Activated T-helper 2 cell treated with anti-CD3 and anti-CD28 coated beads, Interferon-gamma antibody, Interleukin-2, Interleukin-4, amounts not matched to agents 10 μg/mL and 5 μg/mL and 100 μg/mL, durations not matched to agents 14 hours and 24 hours and 36 hours (primary cell): ENCODE measurements at regions of chr11 and their contacts with region 1.

Region 1: DNA sequence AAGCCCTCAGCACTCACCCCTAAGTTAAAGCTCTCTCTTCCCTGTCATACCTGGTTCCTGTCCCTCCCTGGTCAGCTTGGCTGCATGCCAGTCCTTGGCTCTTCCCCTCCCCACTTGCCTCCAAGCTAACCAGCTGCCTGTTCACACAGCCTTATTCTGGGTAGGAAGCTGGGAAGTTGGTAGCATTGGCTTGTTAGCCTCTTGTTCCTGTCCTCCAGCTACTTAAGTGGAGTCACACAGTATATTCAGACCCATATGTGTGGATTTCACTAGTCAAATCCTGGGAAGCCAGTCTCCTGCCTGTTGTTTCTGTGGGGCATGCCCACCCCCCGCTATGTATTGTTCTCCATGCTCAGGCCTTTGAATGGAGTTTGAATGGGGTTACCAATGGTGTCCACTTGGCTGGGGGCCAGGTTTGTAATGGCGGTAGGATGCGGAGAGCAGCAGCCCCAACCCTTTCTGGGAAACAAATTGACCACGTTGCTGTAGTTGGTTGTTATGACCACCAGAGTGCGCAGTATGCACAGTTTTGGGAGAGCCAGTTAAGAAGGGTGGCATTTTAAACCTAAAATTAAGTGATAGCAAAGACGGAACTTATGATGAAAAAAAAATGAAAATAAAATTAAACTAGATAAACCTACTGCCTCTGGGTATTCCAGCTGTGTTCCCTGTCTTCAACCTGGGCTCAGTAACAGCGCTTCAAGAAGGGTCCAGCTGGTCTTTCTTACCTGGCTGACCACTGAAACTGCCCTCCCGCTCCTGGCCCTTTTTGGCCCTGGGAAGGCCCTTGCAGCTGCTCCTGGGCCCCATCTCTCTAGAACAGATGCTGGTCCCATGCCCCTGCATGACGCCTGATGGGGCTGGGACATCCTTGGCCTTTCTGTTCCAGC is 10.7 kb upstream of the RPS3 start:
- DNase-seq: peak; percentile 64
- H3K4me3 Mint-ChIP-seq: no peak overlapping the region
- H3K27ac Mint-ChIP-seq: no peak overlapping the region
- H3K4me1 Mint-ChIP-seq: peaks cover 6% of the 10 kb centered on the region
- H3K27me3 Mint-ChIP-seq: peaks cover 19% of the 10 kb centered on the region

Region 2: DNA sequence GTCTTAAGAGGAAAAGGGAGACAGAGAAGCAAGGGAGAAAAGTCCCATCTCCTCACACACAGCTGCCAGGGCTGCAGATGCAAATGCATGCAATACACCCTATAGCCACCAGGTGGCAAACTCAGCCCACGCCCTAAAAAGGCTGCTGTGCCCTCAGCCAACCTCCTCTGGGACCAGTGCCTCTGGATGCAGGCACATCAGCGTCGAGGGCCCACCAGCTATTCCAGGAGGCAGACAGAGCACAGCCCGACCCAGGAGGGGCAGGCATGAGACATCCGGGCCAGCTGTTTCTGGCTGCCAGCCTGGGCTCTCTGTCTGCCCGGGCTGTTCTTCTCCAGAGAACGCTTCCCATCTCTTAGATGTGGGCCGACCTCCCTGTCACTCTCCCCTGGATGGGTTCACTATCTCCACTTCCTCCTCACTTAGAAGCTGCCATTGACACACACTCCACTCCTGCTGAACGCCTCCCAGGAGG is 108.4 kb before region 1 on chr11:
- intact Hi-C with region 1: loop called (anchors 1 kb)
- DNase-seq: peak; percentile 62
- H3K4me3 Mint-ChIP-seq: no peak overlapping the region
- H3K27ac Mint-ChIP-seq: no peak overlapping the region
- H3K4me1 Mint-ChIP-seq: peaks cover 18% of the 10 kb centered on the region
- H3K27me3 Mint-ChIP-seq: no peaks in the 10 kb centered on the region

Region 3: DNA sequence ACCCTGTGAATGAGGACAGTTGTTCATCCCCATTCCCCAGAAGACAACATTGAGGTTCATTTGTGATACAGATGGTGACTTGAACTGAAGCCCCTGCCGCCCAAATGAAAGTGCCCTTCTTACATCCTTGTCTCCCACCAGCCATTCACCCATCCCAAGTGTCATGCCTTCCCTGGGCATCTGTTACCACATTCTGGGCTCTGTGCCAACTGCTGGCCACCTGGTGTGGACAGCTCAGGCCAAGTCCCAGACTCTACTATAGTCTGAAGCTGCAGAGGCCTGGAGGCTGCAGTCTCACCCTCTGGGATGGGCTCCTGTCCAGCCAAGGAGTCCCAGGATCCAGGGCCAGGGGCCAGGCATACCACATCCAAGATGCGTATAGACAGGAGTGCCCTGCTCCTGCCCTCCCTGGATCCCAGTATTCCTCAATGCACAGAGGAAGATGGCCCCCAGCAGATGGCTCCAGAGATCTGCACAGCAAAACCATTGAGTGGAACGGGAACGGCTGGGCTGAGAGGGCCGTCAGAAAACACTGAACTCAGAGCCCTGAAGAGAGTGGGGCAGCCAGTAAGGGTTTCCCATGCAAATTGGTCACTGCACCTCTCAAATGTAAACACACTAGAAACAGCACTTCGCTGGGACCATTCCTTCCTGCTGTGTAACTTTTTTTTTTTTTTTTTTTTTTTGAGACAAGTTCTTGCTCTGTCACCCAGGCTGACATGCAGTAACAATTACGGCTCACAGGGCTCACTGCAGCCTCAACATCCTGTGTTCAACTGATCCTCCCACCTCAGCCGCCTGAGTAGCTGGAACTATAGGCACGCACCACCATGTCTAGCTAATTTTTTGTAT is 60.0 kb before region 1 on chr11:
- intact Hi-C with region 1: loop called (anchors 2 kb)
- DNase-seq: peak; percentile 54
- H3K4me3 Mint-ChIP-seq: no peak overlapping the region
- H3K27ac Mint-ChIP-seq: peak overlapping the region; percentile 9
- H3K4me1 Mint-ChIP-seq: peaks cover 46% of the 10 kb centered on the region
- H3K27me3 Mint-ChIP-seq: no peaks in the 10 kb centered on the region

Region 4: GRCh38 chr11:75371941-75372789 is 16.5 kb before region 1 on chr11:
- intact Hi-C with region 1: no loop called
- DNase-seq: no peak
- H3K4me3 Mint-ChIP-seq: no peak overlapping the region
- H3K27ac Mint-ChIP-seq: no peak overlapping the region
- H3K4me1 Mint-ChIP-seq: peaks cover 22% of the 10 kb centered on the region
- H3K27me3 Mint-ChIP-seq: no peaks in the 10 kb centered on the region

Region 5: DNA sequence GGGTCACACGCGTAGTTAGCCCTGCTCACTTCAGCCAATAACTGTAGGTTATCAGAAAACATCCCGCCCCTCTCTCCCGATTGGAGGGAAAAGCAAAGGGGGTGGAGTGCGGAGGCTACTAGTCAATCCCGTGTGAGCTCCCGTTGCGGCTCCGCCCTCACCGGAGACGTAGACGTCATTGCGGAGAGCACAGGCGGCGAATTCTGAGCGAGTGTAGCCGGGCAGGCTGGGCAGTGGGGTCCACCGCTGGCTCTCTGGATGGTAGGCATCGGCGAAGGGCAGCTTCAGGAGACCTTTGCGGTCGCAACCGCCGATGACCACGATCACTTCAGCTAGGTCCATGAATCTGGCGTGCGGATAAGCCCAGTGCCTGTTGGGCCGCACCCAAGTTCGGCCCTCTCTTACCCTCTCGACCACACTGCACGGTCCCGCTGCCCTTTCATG is 39.7 kb after region 1 on chr11:
- intact Hi-C with region 1: loop called (anchors 5 kb)
- DNase-seq: peak; percentile 68
- H3K4me3 Mint-ChIP-seq: peak overlapping the region; percentile 42
- H3K27ac Mint-ChIP-seq: no peak overlapping the region
- H3K4me1 Mint-ChIP-seq: peaks cover 10% of the 10 kb centered on the region
- H3K27me3 Mint-ChIP-seq: peaks cover 47% of the 10 kb centered on the region

Region 6: DNA sequence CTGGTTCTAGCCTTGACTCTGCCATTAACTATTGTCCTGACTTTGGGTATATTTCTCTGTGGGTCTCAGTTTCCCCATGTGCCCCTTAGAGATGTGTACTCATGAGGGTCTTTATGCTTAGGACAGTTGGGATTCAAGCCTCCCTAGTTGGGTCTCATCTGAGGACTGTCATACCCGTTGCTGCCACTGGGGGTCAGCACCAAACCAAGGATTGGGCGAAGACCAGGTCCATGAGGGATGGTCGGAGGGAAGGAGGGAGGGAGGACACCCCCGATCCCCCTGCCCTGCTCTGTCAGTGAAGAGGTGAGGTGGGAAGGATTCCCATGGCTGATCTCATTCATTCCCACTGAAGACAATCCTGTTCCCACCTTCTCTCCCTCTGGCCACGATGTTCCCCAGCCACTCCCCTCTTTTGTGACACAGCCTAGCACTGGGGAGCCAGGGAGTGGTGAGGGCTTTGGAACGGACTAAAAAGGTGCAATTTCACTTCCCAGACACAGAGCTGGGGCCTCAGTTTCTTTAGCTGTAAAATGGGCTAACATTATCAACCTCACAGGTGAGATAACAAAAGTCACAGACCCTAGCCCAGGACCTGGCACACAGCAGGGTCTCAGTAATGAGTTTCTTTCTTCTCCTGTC is 56.8 kb after region 1 on chr11:
- intact Hi-C with region 1: loop called (anchors 1 kb)
- DNase-seq: peak; percentile 48
- H3K4me3 Mint-ChIP-seq: no peak overlapping the region
- H3K27ac Mint-ChIP-seq: no peak overlapping the region
- H3K4me1 Mint-ChIP-seq: no peaks in the 10 kb centered on the region
- H3K27me3 Mint-ChIP-seq: peaks cover 3% of the 10 kb centered on the region

Region 7: GRCh38 chr11:75532200-75533048 is 143.8 kb after region 1 on chr11:
- intact Hi-C with region 1: loop called (anchors 1 kb)
- DNase-seq: peak; percentile 72
- H3K4me3 Mint-ChIP-seq: no peak overlapping the region
- H3K27ac Mint-ChIP-seq: no peak overlapping the region
- H3K4me1 Mint-ChIP-seq: peaks cover 28% of the 10 kb centered on the region
- H3K27me3 Mint-ChIP-seq: no peaks in the 10 kb centered on the region